Tibial artery (tissue), 4 donors: ENCODE measurements at regions of chr17 and their contacts with region 1.

Region 1: DNA sequence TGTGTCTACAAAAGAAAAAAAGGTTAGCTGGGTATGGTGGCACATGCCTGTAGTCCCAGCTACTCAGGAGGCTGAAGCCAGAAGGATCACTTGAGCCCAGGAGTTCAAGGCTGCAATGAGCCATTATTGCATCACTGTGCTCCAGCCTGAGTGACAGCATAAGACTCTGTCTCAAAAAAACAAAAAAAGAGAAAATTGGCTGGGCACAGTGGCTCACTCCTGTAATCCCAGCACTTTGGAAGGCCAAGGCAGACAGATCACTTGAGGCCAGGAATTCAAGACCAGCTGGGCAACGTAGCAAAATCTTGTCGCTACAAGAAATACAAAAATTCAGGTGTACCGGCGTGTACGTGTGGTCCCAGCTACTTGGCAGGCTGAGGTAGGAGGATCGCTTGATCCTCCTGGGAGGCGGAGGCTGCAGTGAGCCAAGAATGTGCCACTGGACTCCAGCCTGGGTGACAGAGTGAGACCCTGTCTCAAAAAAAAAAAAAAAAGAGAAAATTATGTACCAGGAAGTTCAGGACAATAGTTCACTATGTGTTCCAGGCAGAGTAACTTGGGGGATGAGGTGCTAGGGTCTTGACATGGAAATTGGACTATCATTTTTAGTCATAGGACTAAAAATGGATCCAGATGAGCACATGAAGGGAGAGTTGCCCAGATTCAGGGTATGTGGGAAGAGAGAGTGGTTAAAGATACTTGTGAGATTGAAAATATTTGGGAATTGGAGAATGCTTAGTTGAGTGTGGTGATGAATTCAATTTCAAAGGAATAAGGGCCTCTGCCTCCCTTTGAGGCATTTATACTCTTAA is 11.0 kb downstream of the ALDH3A2 start:
- DNase-seq: no peak
- H3K4me3 ChIP-seq: no peak overlapping the region
- H3K27ac ChIP-seq: no peak overlapping the region
- H3K4me1 ChIP-seq: peaks cover 0 to 15% (median 6%) of the 10 kb centered on the region in 4 donors
- H3K27me3 ChIP-seq: no peaks in the 10 kb centered on the region
- CTCF ChIP-seq: no peak

Region 2: DNA sequence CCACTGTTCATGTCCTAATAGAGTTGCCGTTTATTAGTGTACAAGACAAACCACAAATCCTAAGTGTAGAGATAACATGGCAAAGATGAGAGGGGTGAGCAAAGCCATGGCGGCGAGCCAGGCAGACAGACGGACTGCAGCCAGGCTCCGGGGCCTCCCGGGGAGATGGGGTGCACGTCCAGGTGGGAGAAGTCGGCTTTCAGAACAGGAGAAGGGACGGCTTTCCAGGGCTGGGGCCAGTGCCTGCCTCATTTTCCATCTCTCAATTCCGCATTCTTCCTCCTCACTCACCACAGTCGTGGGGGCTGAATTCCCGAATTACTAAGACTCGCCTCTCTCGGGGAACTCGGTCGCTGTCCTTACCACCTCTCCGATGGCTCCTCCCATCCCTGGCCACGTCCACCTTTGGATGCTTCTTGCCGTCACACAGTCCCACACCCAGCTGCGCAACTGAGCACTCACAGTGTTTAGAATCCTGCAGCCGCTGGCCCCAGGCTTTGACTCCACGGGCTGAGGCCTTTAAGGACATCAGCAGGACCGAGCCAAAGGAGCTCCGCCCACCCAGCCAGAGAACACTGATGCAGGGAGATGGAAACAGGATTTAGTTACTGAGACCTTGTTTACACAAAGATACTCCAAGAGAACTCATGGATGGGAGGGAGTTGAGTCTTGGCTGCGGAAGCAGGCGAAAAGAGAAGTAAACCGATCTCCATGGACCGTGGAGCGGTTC is 188.9 kb before region 1 on chr17:
- intact Hi-C with region 1: no loop called
- DNase-seq: peak; percentile 86 to 90
- H3K4me3 ChIP-seq: peak overlapping the region; percentile 20 to 26
- H3K27ac ChIP-seq: peak overlapping the region in 1 of 2 donors; percentile 49
- H3K4me1 ChIP-seq: no peaks in the 10 kb centered on the region
- H3K27me3 ChIP-seq: no peaks in the 10 kb centered on the region
- CTCF ChIP-seq: no peak

Region 3: GRCh38 chr17:19744922-19745757 is 85.6 kb after region 1 on chr17:
- intact Hi-C with region 1: loop called (anchors 5 kb)
- DNase-seq: peak; percentile 94 to 96
- H3K4me3 ChIP-seq: peak overlapping the region; percentile 46 to 60
- H3K27ac ChIP-seq: peak overlapping the region; percentile 41 to 65
- H3K4me1 ChIP-seq: peaks cover 0 to 29% (median 21%) of the 10 kb centered on the region in 4 donors
- H3K27me3 ChIP-seq: no peaks in the 10 kb centered on the region
- CTCF ChIP-seq: peak; percentile 90 to 98

Region 4: DNA sequence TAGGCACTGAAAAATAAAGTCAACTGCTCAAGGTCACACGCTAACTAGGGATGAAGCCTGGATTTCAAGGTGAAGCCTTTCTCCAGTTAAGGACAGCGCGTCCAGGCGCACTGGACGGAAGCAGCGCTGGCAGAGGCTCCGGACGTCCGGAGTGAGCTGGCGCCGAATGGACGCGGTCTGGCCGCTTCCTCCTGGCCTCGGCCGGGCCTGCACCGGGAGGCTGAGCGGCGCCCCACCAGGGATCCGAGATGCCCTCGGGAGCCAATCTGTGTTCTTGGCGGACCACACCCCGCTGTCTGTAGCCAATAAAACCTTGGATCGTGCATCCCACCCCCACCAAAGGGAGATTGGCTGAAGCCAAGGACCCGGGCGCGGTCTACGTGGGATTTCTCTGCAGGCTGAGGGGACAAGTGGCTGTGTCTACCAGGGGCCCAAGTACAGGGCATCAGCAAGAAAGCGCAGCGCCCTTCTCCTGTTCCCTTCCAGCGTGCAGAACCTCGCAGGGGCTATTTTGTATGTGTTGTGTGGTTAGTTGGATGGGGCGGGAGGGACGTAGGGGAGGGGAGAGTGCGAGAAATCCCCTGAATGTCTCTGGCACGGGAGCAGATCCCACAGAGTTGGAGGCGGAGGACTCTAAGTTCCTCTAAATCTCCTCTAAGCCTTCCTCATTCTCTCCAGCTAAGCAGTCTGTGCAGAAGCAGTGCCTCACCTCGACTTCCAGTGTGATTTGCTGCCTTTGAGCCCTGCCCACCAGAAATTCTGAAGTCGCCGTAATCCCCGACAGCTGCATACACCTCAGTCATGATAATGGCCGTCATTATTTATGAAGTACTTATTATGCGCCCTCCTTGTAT is 320.6 kb after region 1 on chr17:
- intact Hi-C with region 1: no loop called
- DNase-seq: peak; percentile 23 to 76
- H3K4me3 ChIP-seq: peak overlapping the region in 1 of 2 donors; percentile 16
- H3K27ac ChIP-seq: peak overlapping the region; percentile 9 to 55
- H3K4me1 ChIP-seq: peaks cover 0 to 39% (median 19%) of the 10 kb centered on the region in 4 donors
- H3K27me3 ChIP-seq: no peaks in the 10 kb centered on the region
- CTCF ChIP-seq: no peak